Activated CD4-positive, alpha-beta T cell treated with anti-CD3 and anti-CD28 coated beads for 36 hours (primary cell): ENCODE measurements at regions of chr17 and their contacts with region 1.

Region 1: GRCh38 chr17:54736573-54736972 is 164.1 kb upstream of the TOM1L1 start:
- DNase-seq: no peak
- ATAC-seq: no peak
- H3K4me3 Mint-ChIP-seq: no peak overlapping the region
- H3K27ac Mint-ChIP-seq: no peak overlapping the region
- H3K4me1 Mint-ChIP-seq: no peaks in the 10 kb centered on the region
- H3K27me3 Mint-ChIP-seq: no peaks in the 10 kb centered on the region

Region 2: GRCh38 chr17:54785643-54786268 is 49.2 kb after region 1 on chr17:
- CTCF ChIA-PET with region 1: no interaction called
- POLR2A ChIA-PET with region 1: no interaction called
- intact Hi-C with region 1: loop called in 1 of 2 experiments (anchors 10 kb)
- DNase-seq: no peak
- ATAC-seq: no peak
- H3K4me3 Mint-ChIP-seq: no peak overlapping the region
- H3K27ac Mint-ChIP-seq: no peak overlapping the region
- H3K4me1 Mint-ChIP-seq: no peaks in the 10 kb centered on the region
- H3K27me3 Mint-ChIP-seq: no peaks in the 10 kb centered on the region